ENCODE measurements at regions of chr1 and their contacts with region 1.

Region 1: DNA sequence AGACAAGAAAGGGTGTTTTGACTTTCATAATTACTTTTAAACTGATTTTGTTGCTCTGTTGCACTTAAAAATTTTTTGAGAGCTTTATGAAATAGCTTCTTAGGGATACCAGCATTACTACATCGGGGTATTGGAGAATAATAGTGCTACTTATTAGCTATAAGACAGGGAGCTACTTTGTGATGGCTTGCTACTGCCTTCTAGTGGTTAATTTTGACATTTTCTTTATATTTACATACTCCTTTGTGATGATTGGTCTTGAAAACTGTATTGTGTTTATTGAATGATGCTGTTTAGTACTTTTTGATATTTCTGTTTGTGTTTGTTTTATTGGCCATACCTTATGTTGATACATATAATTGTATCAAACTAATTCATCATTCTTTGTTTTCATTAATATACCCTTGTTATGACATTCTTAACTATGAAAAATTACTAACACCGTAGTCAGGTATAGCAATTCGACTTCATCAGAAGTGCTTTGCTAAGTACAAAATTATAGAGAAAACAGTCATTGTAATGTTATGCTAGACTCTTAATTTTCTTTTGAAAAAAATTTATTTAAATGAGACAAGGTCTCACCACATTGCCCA is 85.5 kb downstream of the CLIC4 start:
- DNase-seq: peak; percentile 62
- ATAC-seq: peak; percentile 58; the same call in 2 of the 3 replicates
- H3K4me3 ChIP-seq: no peak overlapping the region
- H3K27ac ChIP-seq: no peak overlapping the region
- H3K4me1 ChIP-seq: peaks cover 5% of the 10 kb centered on the region; the same call in 1 of the 2 replicates
- H3K27me3 ChIP-seq: no peaks in the 10 kb centered on the region
- CTCF ChIP-seq: peak; percentile 77
- EP300 ChIP-seq: no peak
- POLR2A ChIP-seq: no peak
- RAD21 ChIP-seq: peak; percentile 41; the same call in 1 of the 2 replicates

Region 2: DNA sequence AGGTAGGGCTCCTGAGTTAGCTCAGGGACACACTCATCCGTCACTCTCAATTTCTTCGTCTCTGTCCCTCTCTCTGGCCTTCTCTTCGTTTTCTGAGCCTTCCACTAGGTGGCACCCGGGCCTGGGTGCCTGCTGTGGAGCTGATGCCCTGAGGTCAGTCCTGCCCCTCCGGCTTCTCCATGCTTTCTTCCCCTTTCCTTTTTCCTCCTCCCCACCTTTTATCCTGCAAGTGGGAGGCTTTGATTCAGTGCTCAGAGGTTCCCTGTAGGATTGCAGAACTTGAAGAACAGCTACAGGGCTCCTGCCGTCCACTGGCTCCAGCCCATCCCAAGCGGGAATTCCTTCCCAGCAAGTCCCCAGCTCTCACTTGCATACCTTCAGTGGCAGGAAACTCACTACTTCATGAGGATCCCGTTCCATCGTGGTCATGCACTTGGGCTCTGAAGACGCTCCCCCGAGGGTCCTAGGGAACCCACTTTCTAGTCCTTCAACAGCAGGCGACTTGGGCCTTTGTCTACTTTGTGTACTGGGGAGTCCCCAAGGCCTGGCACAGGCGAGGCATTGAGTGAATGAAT is 142.1 kb before region 1 on chr1:
- CTCF ChIA-PET with region 1: interaction called, 61 read pairs
- POLR2A ChIA-PET with region 1: interaction called, 12 read pairs
- in situ Hi-C with region 1: loop called (anchors 5 kb)
- intact Hi-C with region 1: loop called (anchors 2 kb)
- DNase-seq: peak; percentile 57
- ATAC-seq: peak; percentile 94
- H3K4me3 ChIP-seq: no peak overlapping the region
- H3K27ac ChIP-seq: no peak overlapping the region
- H3K4me1 ChIP-seq: peaks cover 23% of the 10 kb centered on the region
- H3K27me3 ChIP-seq: no peaks in the 10 kb centered on the region
- CTCF ChIP-seq: peak; percentile 94
- EP300 ChIP-seq: no peak
- POLR2A ChIP-seq: no peak
- RAD21 ChIP-seq: peak; percentile 87

Region 3: DNA sequence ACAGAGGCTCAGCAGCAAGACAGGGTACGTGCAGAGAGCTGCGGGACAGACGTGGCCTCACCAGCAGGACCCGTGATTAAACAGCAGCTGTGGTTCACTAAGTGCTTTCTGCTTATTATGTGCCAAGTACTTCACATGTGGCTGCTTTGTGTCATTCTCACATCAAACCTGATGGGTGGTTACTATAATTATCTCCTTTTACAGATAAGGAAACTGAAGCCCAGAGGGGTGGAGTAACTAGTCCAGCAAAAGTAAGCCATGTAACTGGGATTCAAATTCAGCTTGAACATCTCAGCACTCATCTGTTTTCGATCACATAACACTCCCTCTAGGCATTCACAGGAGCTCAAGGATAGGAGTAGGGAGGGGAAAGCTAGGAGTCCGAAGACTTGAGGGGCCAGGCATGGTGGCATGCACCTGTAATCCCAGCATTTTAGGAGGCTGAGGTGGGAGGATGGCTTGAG is 136.4 kb before region 1 on chr1:
- CTCF ChIA-PET with region 1: interaction called, 61 read pairs
- POLR2A ChIA-PET with region 1: interaction called, 12 read pairs
- in situ Hi-C with region 1: loop called (anchors 5 kb)
- intact Hi-C with region 1: loop called (anchors 2 kb)
- DNase-seq: no peak
- ATAC-seq: peak; percentile 26; the same call in 1 of the 3 replicates
- H3K4me3 ChIP-seq: peak overlapping the region in 1 of 3 experiments; percentile 49; a peak in 1 of 6 replicates
- H3K27ac ChIP-seq: no peak overlapping the region
- H3K4me1 ChIP-seq: peaks cover 40% of the 10 kb centered on the region
- H3K27me3 ChIP-seq: peaks cover 0 to 4% of the 10 kb centered on the region in 2 experiments; a peak in 1 of 5 replicates
- CTCF ChIP-seq: no peak
- EP300 ChIP-seq: no peak
- POLR2A ChIP-seq: no peak
- RAD21 ChIP-seq: no peak

Region 4: GRCh38 chr1:24754229-24754628 is 76.5 kb before region 1 on chr1:
- CTCF ChIA-PET with region 1: no interaction called
- POLR2A ChIA-PET with region 1: no interaction called
- in situ Hi-C with region 1: no loop called
- intact Hi-C with region 1: no loop called
- DNase-seq: no peak
- ATAC-seq: no peak
- H3K4me3 ChIP-seq: no peak overlapping the region
- H3K27ac ChIP-seq: no peak overlapping the region
- H3K4me1 ChIP-seq: peaks cover 53% of the 10 kb centered on the region
- H3K27me3 ChIP-seq: no peaks in the 10 kb centered on the region
- CTCF ChIP-seq: no peak
- EP300 ChIP-seq: no peak
- POLR2A ChIP-seq: no peak
- RAD21 ChIP-seq: no peak